ENCODE measurements at regions of chr15 and their contacts with region 1.

Region 1: DNA sequence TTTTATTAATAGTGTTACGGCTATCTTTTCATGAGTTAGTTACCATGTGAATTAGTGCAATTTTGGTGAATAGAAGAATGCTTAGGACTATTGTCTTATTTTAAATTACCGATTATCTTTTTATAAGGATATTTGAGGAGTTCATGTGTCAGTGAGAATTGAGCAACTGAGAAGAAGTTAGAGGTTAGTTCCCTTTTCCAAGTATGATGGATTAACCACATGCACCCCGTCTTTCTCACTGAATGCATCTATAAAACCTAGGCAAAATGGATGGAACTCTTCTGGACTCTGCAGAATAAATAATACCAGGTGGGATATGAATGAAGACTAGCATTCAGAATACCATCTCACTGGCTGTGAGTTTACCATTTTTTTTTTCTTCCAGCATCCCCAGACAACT is 74.3 kb downstream of the TCF12 start:
- DNase-seq: no peak
- ATAC-seq: no peak
- H3K4me3 ChIP-seq: no peak overlapping the region
- H3K27ac ChIP-seq: no peak overlapping the region
- H3K4me1 ChIP-seq: peaks cover 0 to 35% (median 23%) of the 10 kb centered on the region in 12 donors
- H3K27me3 ChIP-seq: no peaks in the 10 kb centered on the region
- CTCF ChIP-seq: no peak
- POLR2A ChIP-seq: no peak

Region 2: DNA sequence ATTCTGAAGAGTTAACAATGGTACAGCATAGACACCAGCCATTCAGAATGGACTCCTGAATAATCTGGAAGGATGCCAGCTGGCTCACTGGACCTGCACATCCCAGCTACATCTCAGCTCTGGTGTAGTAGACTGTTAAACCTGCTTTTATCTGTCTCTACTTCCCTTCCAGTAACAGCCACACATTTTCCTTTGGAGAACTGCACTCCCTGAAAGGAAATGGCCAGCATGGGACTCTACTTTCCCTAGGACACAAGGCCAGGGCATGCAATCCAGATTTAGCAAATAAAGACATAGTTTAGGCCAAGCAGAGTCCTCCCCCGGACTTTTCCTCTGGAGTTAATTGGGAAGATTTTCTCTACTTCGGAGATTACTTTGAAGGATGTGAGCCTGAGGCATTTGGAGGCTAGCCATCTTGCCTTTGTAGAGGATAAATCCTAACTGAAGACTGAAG is 157.0 kb before region 1 on chr15:
- intact Hi-C with region 1: loop called in 1 of 10 experiments (anchors 10 kb)
- DNase-seq: peak in 4 of 5 donors; percentile 32 to 60 (median 42)
- ATAC-seq: peak; percentile 49 to 74 (median 60)
- H3K4me3 ChIP-seq: no peak overlapping the region
- H3K27ac ChIP-seq: peak overlapping the region in 1 of 12 donors; percentile 15
- H3K4me1 ChIP-seq: peaks cover 0 to 24% (median 10%) of the 10 kb centered on the region in 12 donors
- H3K27me3 ChIP-seq: no peaks in the 10 kb centered on the region
- CTCF ChIP-seq: no peak
- POLR2A ChIP-seq: no peak

Region 3: DNA sequence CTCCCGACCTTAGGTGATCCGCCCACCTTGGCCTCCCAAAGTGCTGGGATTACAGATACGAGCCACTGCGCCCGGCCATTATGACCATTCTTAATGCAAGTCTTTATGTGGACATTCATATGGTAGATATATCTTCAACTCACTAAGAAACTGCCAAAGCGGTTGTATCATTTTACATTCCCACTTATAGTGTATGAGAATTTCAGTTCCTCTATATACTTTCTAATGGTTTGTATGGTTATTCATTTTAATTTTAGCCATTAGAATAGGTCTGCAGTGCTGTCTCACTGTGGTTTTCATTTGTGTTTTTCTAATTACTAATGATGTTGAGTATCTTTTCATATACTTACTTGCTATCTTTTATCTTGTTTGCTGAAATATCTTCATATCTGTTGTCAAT is 41.7 kb before region 1 on chr15:
- intact Hi-C with region 1: no loop called
- DNase-seq: no peak
- ATAC-seq: no peak
- H3K4me3 ChIP-seq: no peak overlapping the region
- H3K27ac ChIP-seq: no peak overlapping the region
- H3K4me1 ChIP-seq: peaks cover 0 to 29% (median 8%) of the 10 kb centered on the region in 12 donors
- H3K27me3 ChIP-seq: no peaks in the 10 kb centered on the region
- CTCF ChIP-seq: no peak
- POLR2A ChIP-seq: no peak

Measured in heart left ventricle (tissue), 16 donors.